ENCODE measurements at regions of chr5 and their contacts with region 1.

Region 1: GRCh38 chr5:151811593-151812321 is 40.0 kb downstream of the G3BP1 start:
- DNase-seq: no peak
- ATAC-seq: no peak
- H3K4me3 ChIP-seq: no peak overlapping the region
- H3K27ac ChIP-seq: no peak overlapping the region
- H3K4me1 ChIP-seq: no peaks in the 10 kb centered on the region
- H3K27me3 ChIP-seq: no peaks in the 10 kb centered on the region
- CTCF ChIP-seq: no peak
- EP300 ChIP-seq: no peak
- POLR2A ChIP-seq: no peak
- RAD21 ChIP-seq: no peak

Region 2: DNA sequence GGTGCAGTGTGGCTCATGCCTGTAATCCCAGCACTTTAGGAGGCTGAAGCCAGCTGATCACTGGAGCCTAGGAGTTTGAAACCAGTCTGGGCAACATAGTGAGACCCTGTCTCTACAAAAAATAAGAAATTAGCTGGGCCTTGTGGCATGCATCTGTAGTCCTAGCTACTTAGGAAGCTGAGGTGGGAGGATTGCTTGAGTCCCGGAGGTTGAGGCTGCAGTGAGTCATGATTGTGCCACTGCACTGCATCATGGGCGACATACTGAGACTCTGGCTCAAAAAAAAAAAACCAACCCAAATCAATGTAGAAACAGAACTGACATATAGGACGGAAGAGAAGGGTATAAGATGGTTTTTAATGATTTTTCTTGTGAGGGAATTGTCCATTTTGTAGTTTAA is 12.3 kb before region 1 on chr5:
- CTCF ChIA-PET with region 1: interaction called, 10 read pairs
- POLR2A ChIA-PET with region 1: no interaction called
- RAD21 ChIA-PET with region 1: interaction called, 3 read pairs
- SMC1A ChIA-PET with region 1: interaction called, 12 read pairs
- in situ Hi-C with region 1: no loop called
- intact Hi-C with region 1: no loop called
- DNase-seq: no peak
- ATAC-seq: no peak
- H3K4me3 ChIP-seq: no peak overlapping the region
- H3K27ac ChIP-seq: no peak overlapping the region
- H3K4me1 ChIP-seq: no peaks in the 10 kb centered on the region
- H3K27me3 ChIP-seq: no peaks in the 10 kb centered on the region
- CTCF ChIP-seq: no peak
- EP300 ChIP-seq: no peak
- POLR2A ChIP-seq: no peak
- RAD21 ChIP-seq: no peak